ENCODE measurements at regions of chr17 and their contacts with region 1.

Region 1: GRCh38 chr17:17859909-17860765 is 23.4 kb upstream of the SREBF1 start:
- DNase-seq: peak; percentile 70
- H3K4me3 ChIP-seq: no peak overlapping the region
- H3K27ac ChIP-seq: no peak overlapping the region
- H3K4me1 ChIP-seq: peaks cover 10% of the 10 kb centered on the region; the same call in 1 of the 2 replicates
- H3K27me3 ChIP-seq: no peaks in the 10 kb centered on the region

Region 2: DNA sequence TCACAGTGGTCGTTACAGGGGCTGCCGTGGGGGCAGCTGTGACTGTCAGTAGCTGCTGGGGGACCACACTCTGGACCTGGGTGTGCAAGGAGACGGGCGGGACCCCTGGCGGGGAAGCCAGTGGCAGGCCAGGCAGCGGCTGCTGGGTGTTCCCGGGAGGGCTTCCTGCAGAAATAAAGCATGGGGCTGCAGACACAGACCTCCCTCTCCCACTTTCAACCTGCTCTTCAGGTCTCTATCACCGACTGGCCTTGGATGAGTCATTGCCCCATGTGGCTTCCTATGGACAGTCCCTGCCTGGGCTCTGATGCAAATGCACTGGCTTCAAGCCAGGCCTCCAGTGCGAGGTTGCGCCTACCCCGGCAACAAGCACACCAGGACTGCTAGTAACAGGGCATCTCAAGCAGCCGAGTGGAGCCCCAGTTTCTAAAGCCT is 40.6 kb before region 1 on chr17:
- in situ Hi-C with region 1: loop called (anchors 5 kb)
- DNase-seq: peak; percentile 92
- H3K4me3 ChIP-seq: no peak overlapping the region
- H3K27ac ChIP-seq: no peak overlapping the region
- H3K4me1 ChIP-seq: peaks cover 26% of the 10 kb centered on the region
- H3K27me3 ChIP-seq: no peaks in the 10 kb centered on the region

Region 3: GRCh38 chr17:17913695-17914332 is 53.7 kb after region 1 on chr17:
- in situ Hi-C with region 1: no loop called
- DNase-seq: peak; percentile 92
- H3K4me3 ChIP-seq: no peak overlapping the region
- H3K27ac ChIP-seq: peak overlapping the region; percentile 36
- H3K4me1 ChIP-seq: peaks cover 18% of the 10 kb centered on the region
- H3K27me3 ChIP-seq: no peaks in the 10 kb centered on the region

Region 4: DNA sequence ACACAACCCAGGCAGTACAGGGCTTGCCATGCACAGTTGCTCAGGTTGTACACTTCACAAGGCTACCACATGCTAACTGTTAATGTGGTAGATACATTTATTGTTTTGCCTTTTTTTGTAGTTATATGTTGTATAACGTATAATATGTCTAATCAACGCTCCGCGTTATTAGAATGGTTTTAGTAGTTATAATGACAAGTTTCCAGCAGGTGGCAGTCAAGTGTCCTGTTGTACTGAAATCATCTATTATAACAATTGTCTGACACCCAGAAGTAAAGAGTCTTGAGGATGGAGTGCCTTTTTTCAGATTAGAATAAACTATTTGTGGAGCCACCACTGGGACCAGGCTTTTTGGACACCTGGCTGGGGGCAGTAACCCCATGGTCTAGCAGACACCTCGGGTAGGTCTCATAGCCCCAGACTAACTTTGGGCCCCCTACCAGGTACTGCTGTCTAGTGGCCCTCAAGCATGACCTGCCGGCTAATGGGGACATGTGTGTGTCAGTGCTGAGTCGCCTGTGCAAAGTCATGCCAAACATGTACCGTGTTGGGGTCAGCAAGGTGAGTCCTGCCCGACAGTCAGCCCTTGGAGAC is 281.2 kb after region 1 on chr17:
- in situ Hi-C with region 1: no loop called
- DNase-seq: peak; percentile 75
- H3K4me3 ChIP-seq: no peak overlapping the region
- H3K27ac ChIP-seq: no peak overlapping the region
- H3K4me1 ChIP-seq: no peaks in the 10 kb centered on the region
- H3K27me3 ChIP-seq: no peaks in the 10 kb centered on the region

Measured in GM23248 (cell line).